ENCODE measurements at regions of chrX and their contacts with region 1.

Region 1: GRCh38 chrX:48511561-48511960 is 2.8 kb downstream of the PORCN start:
- DNase-seq: no peak
- ATAC-seq: no peak
- H3K4me3 ChIP-seq: no peak overlapping the region
- H3K27ac ChIP-seq: no peak overlapping the region
- H3K4me1 ChIP-seq: peaks cover 2% of the 10 kb centered on the region
- H3K27me3 ChIP-seq: no peaks in the 10 kb centered on the region

Region 2: DNA sequence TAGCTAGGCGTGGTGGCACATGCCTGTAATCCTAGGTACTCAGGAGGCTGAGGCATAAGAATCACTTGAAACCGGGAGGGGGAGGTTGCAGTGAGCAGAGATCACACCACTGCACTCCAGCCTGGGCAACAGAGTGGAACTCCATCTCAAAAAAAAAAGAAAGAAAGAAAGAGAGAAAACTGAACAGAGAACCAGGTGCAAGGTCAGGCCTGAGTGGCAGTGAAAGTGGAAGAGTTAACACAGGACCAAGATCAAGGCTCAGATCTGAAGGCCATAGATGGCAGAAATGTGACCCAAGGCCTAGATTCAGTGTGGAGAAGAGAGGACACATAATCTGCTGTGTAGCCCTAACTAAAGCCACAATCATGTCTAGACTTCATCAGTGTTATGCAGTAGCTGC is 435.2 kb before region 1 on chrX:
- intact Hi-C with region 1: loop called in 1 of 4 experiments (anchors 5 kb)
- DNase-seq: no peak
- ATAC-seq: no peak
- H3K4me3 ChIP-seq: no peak overlapping the region
- H3K27ac ChIP-seq: no peak overlapping the region
- H3K4me1 ChIP-seq: no peaks in the 10 kb centered on the region
- H3K27me3 ChIP-seq: no peaks in the 10 kb centered on the region

Region 3: GRCh38 chrX:48574270-48575266 is 63.0 kb after region 1 on chrX and contains the start of gene RBM3:
- intact Hi-C with region 1: no loop called
- DNase-seq: peak; percentile 94 to 97 (median 96)
- ATAC-seq: peak; percentile 97 to 98
- H3K4me3 ChIP-seq: peak within 1 kb of the TSS; percentile 65
- H3K27ac ChIP-seq: peak within 1 kb of the TSS; percentile 99
- H3K4me1 ChIP-seq: peaks cover 5% of the 10 kb centered on the region
- H3K27me3 ChIP-seq: no peaks in the 10 kb centered on the region
- total RNA-seq, gene RBM3: 100 to 221 (median 129) TPM

Measured in right cardiac atrium (tissue), 5 donors.